ENCODE measurements at regions of chr4 and their contacts with region 1.

Region 1: GRCh38 chr4:2761035-2761923 is 5.1 kb upstream of the TNIP2 start:
- DNase-seq: no peak
- H3K4me3 ChIP-seq: no peak overlapping the region
- H3K4me3 Mint-ChIP-seq: peak overlapping the region in 1 of 7 donors; percentile 57
- H3K27ac ChIP-seq: no peak overlapping the region
- H3K27ac Mint-ChIP-seq: peak overlapping the region in 3 of 8 donors; percentile 28 to 73 (median 42)
- H3K4me1 ChIP-seq: peaks cover 4% of the 10 kb centered on the region
- H3K4me1 Mint-ChIP-seq: peaks cover 9 to 12% (median 10%) of the 10 kb centered on the region in 3 donors
- H3K27me3 ChIP-seq: no peaks in the 10 kb centered on the region
- H3K27me3 Mint-ChIP-seq: peaks cover 0 to 3% of the 10 kb centered on the region in 2 donors

Region 2: GRCh38 chr4:2591189-2591588 is 170.1 kb before region 1 on chr4:
- CTCF ChIA-PET with region 1: no interaction called
- POLR2A ChIA-PET with region 1: no interaction called
- DNase-seq: no peak
- H3K4me3 ChIP-seq: no peak overlapping the region
- H3K4me3 Mint-ChIP-seq: peak overlapping the region in 3 of 7 donors; percentile 3 to 12 (median 10)
- H3K27ac ChIP-seq: no peak overlapping the region
- H3K27ac Mint-ChIP-seq: peak overlapping the region in 7 of 8 donors; percentile 43 to 91 (median 72)
- H3K4me1 ChIP-seq: peaks cover 50% of the 10 kb centered on the region
- H3K4me1 Mint-ChIP-seq: peaks cover 66 to 86% (median 81%) of the 10 kb centered on the region in 3 donors
- H3K27me3 ChIP-seq: no peaks in the 10 kb centered on the region
- H3K27me3 Mint-ChIP-seq: peaks cover 0 to 1% of the 10 kb centered on the region in 2 donors

Region 3: GRCh38 chr4:2712261-2712842 is 48.9 kb before region 1 on chr4:
- CTCF ChIA-PET with region 1: no interaction called
- POLR2A ChIA-PET with region 1: no interaction called
- DNase-seq: no peak
- H3K4me3 ChIP-seq: no peak overlapping the region
- H3K4me3 Mint-ChIP-seq: no peak overlapping the region
- H3K27ac ChIP-seq: no peak overlapping the region
- H3K27ac Mint-ChIP-seq: peak overlapping the region in 4 of 8 donors; percentile 17 to 66 (median 56)
- H3K4me1 ChIP-seq: peaks cover 14% of the 10 kb centered on the region
- H3K4me1 Mint-ChIP-seq: peaks cover 22 to 28% (median 24%) of the 10 kb centered on the region in 3 donors
- H3K27me3 ChIP-seq: no peaks in the 10 kb centered on the region
- H3K27me3 Mint-ChIP-seq: peaks cover 0 to 1% of the 10 kb centered on the region in 2 donors

Region 4: GRCh38 chr4:2811830-2812611 is 50.7 kb after region 1 on chr4:
- CTCF ChIA-PET with region 1: interaction called, 30 read pairs
- POLR2A ChIA-PET with region 1: interaction called, 4 read pairs
- DNase-seq: peak; percentile 50 to 72 (median 61)
- H3K4me3 ChIP-seq: peak overlapping the region; percentile 59
- H3K4me3 Mint-ChIP-seq: peak overlapping the region; percentile 73 to 92 (median 88)
- H3K27ac ChIP-seq: peak overlapping the region; percentile 66
- H3K27ac Mint-ChIP-seq: peak overlapping the region; percentile 54 to 99 (median 95)
- H3K4me1 ChIP-seq: peaks cover 52% of the 10 kb centered on the region
- H3K4me1 Mint-ChIP-seq: peaks cover 49 to 54% (median 51%) of the 10 kb centered on the region in 3 donors
- H3K27me3 ChIP-seq: no peaks in the 10 kb centered on the region
- H3K27me3 Mint-ChIP-seq: no peaks in the 10 kb centered on the region

Region 5: DNA sequence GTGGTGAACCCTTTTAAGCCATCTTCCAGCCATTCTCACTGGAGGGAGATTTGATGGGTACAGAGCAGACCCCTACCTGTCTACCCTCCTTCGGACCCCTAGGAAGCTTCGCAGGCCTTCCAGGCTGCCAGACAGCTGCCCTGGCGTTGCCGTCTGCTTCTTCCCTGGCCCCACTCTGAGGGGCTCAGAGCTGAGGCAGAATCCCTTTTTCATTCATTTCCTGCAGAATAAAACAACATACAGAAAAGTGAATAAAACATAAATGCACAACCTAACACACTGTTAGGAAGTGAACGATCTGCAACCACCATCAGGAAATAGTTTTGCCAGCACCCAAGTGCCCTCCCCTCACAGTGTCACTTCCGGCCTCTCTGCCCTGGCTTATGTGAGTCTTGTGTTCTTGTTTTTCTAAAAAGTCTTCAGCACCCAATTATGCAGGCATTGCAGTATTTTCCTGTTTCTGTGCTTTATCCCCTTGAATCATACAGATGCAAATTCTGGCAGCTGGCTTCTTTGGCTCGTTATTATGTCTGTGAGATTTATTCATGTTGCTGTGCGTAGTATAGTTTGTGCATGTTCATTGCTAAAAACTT is 76.7 kb after region 1 on chr4:
- CTCF ChIA-PET with region 1: interaction called, 10 read pairs
- POLR2A ChIA-PET with region 1: interaction called, 3 read pairs
- DNase-seq: peak; percentile 57 to 84 (median 76)
- H3K4me3 ChIP-seq: peak overlapping the region; percentile 60
- H3K4me3 Mint-ChIP-seq: peak overlapping the region; percentile 75 to 87 (median 84)
- H3K27ac ChIP-seq: peak overlapping the region; percentile 48
- H3K27ac Mint-ChIP-seq: peak overlapping the region; percentile 83 to 96 (median 93)
- H3K4me1 ChIP-seq: peaks cover 64% of the 10 kb centered on the region
- H3K4me1 Mint-ChIP-seq: peaks cover 64 to 79% (median 73%) of the 10 kb centered on the region in 3 donors
- H3K27me3 ChIP-seq: no peaks in the 10 kb centered on the region
- H3K27me3 Mint-ChIP-seq: no peaks in the 10 kb centered on the region

Region 6: DNA sequence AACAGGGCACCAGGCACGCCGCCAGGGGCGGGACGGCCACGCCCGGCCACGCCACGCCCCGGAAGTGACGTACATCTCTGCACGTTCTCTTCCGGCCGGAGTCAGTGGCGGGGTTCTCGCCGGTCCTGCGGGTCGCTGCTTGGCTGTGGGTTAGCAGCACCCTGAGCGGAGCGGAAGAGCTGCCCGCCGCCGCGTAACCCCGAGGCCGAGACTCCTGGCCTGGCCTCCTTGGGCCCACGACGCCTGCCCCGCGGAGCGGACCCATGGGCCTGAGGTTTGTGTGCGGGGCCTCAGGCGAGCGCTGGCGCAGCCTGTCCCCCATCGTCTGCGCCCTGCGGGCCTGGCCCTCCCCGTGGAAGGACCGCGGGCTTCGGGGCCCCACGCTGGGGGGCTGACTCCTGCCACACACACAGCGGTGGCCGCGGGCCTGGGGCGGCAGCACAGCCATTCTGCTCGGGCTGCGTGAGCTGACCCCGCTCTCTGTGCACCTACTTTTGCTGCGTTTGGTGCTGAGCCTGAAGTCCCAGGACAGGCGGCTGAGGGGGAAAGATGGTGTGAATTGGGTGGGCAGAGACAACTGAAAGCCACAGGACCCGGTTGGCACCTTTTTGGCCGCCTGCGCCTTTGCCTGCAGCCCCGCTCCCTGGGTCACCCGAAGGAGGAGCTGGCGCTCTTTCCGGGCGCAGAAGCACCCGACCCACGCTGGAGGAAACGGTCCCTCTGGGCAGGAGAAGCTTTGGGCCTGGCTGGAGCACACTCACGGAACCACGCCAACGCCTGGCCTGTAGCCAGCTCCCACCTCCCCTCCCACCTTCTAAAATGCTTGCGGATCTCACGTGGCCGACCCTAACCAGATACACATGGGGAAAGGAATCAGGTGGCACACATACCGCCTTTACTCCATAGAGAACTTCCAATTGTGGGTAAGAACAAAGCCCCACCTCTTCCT is 173.8 kb after region 1 on chr4:
- CTCF ChIA-PET with region 1: interaction called, 13 read pairs
- POLR2A ChIA-PET with region 1: interaction called, 3 read pairs
- DNase-seq: peak; percentile 93 to 97 (median 96)
- H3K4me3 ChIP-seq: peak overlapping the region; percentile 91
- H3K4me3 Mint-ChIP-seq: peak overlapping the region; percentile 88 to 99 (median 90)
- H3K27ac ChIP-seq: peak overlapping the region; percentile 96
- H3K27ac Mint-ChIP-seq: peak overlapping the region; percentile 86 to 100 (median 96)
- H3K4me1 ChIP-seq: peaks cover 55% of the 10 kb centered on the region
- H3K4me1 Mint-ChIP-seq: peaks cover 46 to 66% (median 59%) of the 10 kb centered on the region in 3 donors
- H3K27me3 ChIP-seq: no peaks in the 10 kb centered on the region
- H3K27me3 Mint-ChIP-seq: no peaks in the 10 kb centered on the region

Region 7: DNA sequence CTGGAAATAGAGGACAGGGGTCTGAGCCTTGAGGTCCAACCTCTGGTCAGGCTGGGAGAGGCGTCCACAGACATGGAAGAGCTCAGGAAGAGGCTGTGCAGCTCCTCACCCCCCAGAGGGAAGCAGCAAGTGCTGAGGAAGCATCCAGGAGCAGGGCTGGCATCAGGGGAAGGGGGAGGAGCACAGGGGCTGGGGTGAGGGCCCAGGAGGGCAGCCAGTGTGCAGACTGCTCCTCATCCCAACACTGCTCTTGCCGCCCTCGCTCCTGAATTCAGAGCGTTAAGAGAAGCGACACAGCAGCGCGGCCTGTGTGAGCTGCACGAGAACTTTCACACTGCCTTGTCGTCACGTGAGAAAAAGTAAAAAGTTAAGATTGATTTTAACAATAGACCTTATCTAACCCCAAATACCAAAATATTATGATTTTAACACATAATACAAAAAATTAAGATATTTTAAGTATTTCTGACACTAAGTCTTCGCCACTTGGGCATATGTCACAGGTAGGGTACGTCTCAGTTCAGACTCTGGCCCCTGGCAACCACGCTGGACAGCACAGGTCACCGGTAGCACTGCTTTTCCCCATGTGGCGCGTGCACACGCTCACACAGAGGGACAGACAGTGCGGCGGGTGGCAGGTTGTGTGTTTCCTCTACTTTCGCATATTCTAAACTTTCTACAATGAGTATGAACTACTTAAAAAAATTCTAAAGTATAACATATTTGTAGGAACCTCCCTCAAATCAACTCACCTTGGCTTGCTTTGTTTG is 182.2 kb after region 1 on chr4:
- CTCF ChIA-PET with region 1: interaction called, 11 read pairs
- POLR2A ChIA-PET with region 1: no interaction called
- DNase-seq: no peak
- H3K4me3 ChIP-seq: no peak overlapping the region
- H3K4me3 Mint-ChIP-seq: peak overlapping the region in 2 of 7 donors; percentile 61 to 83
- H3K27ac ChIP-seq: peak overlapping the region; percentile 31
- H3K27ac Mint-ChIP-seq: peak overlapping the region in 7 of 8 donors; percentile 36 to 96 (median 72)
- H3K4me1 ChIP-seq: no peaks in the 10 kb centered on the region
- H3K4me1 Mint-ChIP-seq: peaks cover 11 to 32% (median 25%) of the 10 kb centered on the region in 3 donors
- H3K27me3 ChIP-seq: no peaks in the 10 kb centered on the region
- H3K27me3 Mint-ChIP-seq: peaks cover 0 to 5% of the 10 kb centered on the region in 2 donors

Region 8: GRCh38 chr4:2948895-2949765 is 187.9 kb after region 1 on chr4:
- CTCF ChIA-PET with region 1: interaction called, 14 read pairs
- POLR2A ChIA-PET with region 1: no interaction called
- DNase-seq: peak in 1 of 5 donors; percentile 49
- H3K4me3 ChIP-seq: no peak overlapping the region
- H3K4me3 Mint-ChIP-seq: no peak overlapping the region
- H3K27ac ChIP-seq: no peak overlapping the region
- H3K27ac Mint-ChIP-seq: peak overlapping the region in 3 of 8 donors; percentile 17 to 74 (median 66)
- H3K4me1 ChIP-seq: no peaks in the 10 kb centered on the region
- H3K4me1 Mint-ChIP-seq: peaks cover 3 to 4% (median 3%) of the 10 kb centered on the region in 3 donors
- H3K27me3 ChIP-seq: no peaks in the 10 kb centered on the region
- H3K27me3 Mint-ChIP-seq: peaks cover 0 to 2% of the 10 kb centered on the region in 2 donors

Region 9: DNA sequence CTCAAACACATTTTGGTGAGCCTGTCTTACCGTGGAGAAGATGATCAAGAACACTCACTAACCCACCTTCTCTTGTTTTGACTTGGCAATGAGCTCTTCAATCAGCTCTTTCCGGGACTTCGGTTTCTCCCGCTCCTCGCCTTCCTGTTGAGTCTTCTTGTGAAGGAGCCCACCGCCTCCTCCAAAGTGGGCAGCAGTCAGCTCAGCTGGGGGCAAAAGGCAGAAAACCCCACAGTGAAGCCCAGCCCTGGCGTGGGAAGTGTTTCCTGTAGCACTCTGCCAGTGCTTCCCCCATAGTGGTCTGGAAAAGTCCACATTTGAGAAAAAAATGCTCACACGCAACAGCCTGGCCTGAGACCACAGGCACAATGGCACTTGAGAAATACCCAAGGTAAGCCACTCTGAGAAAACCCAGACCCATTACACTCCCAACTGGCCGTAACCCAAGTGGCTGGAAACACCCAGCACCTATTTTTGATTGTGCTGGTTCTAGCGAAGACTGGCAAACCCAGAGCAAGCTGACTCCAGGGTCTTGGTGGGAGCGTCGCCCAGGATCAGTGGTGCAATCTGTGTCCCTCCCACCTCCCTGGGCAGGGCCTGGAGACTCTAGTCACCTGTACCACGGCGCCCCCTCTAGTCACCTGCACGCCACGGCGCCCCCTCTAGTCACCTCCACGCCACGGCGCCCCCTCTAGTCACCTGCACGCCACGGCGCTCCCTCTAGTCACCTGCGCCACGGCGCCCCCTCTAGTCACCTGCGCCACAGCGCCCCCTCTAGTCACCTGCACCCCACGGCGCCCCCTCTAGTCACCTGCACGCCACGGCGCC is 193.3 kb after region 1 on chr4:
- CTCF ChIA-PET with region 1: interaction called, 14 read pairs
- POLR2A ChIA-PET with region 1: no interaction called
- DNase-seq: peak in 4 of 5 donors; percentile 43 to 68 (median 51)
- H3K4me3 ChIP-seq: no peak overlapping the region
- H3K4me3 Mint-ChIP-seq: peak overlapping the region in 3 of 7 donors; percentile 4 to 28 (median 23)
- H3K27ac ChIP-seq: no peak overlapping the region
- H3K27ac Mint-ChIP-seq: peak overlapping the region; percentile 85 to 96 (median 92)
- H3K4me1 ChIP-seq: peaks cover 5% of the 10 kb centered on the region
- H3K4me1 Mint-ChIP-seq: peaks cover 23 to 46% (median 45%) of the 10 kb centered on the region in 3 donors
- H3K27me3 ChIP-seq: no peaks in the 10 kb centered on the region
- H3K27me3 Mint-ChIP-seq: no peaks in the 10 kb centered on the region

Region 10: GRCh38 chr4:3292571-3293400 is 531.5 kb after region 1 on chr4 and contains the start of gene RGS12:
- CTCF ChIA-PET with region 1: no interaction called
- POLR2A ChIA-PET with region 1: no interaction called
- DNase-seq: peak; percentile 61 to 88 (median 78)
- H3K4me3 ChIP-seq: peak within 1 kb of the TSS; percentile 61
- H3K4me3 Mint-ChIP-seq: peak within 1 kb of the TSS; percentile 85 to 95 (median 91)
- H3K27ac ChIP-seq: peak within 1 kb of the TSS; percentile 54
- H3K27ac Mint-ChIP-seq: peak within 1 kb of the TSS in 7 of 8 donors; percentile 66 to 99 (median 80)
- H3K4me1 ChIP-seq: peaks cover 6% of the 10 kb centered on the region
- H3K4me1 Mint-ChIP-seq: peaks cover 14% of the 10 kb centered on the region in 3 donors
- H3K27me3 ChIP-seq: peaks cover 7% of the 10 kb centered on the region
- H3K27me3 Mint-ChIP-seq: peaks cover 10 to 18% of the 10 kb centered on the region in 2 donors
- total RNA-seq, gene RGS12: 2.3 to 2.4 TPM